GM12878 (cell line): ENCODE measurements at regions of chr2 and their contacts with region 1.

Region 1: GRCh38 chr2:127563458-127564428 is 28.3 kb downstream of the MYO7B start:
- DNase-seq: peak; percentile 92
- ATAC-seq: peak; percentile 92
- H3K4me3 ChIP-seq: peak overlapping the region; percentile 54
- H3K27ac ChIP-seq: peak overlapping the region; percentile 70
- H3K4me1 ChIP-seq: peaks cover 17% of the 10 kb centered on the region
- H3K27me3 ChIP-seq: 0 out of 4 replicates have a peak, but pooled peaks cover 0 to 4% of the 10 kb centered on the region in 2 experiments
- CTCF ChIP-seq: no peak
- EP300 ChIP-seq: peak; percentile 86 to 95
- POLR2A ChIP-seq: no peak
- RAD21 ChIP-seq: no peak

Region 2: GRCh38 chr2:127526149-127527000 is 37.4 kb before region 1 on chr2 and contains the start of gene IWS1:
- CTCF ChIA-PET with region 1: interaction called, 10 read pairs
- POLR2A ChIA-PET with region 1: interaction called, 8 read pairs
- RAD21 ChIA-PET with region 1: interaction called, 15 read pairs
- SMC1A ChIA-PET with region 1: interaction called, 15 read pairs
- in situ Hi-C with region 1: no loop called
- intact Hi-C with region 1: loop called (anchors 1 kb)
- DNase-seq: peak; percentile 88
- ATAC-seq: peak; percentile 93
- H3K4me3 ChIP-seq: peak within 1 kb of the TSS; percentile 93
- H3K27ac ChIP-seq: peak within 1 kb of the TSS; percentile 83
- H3K4me1 ChIP-seq: no peaks in the 10 kb centered on the region
- H3K27me3 ChIP-seq: no peaks in the 10 kb centered on the region
- CTCF ChIP-seq: peak in 2 of 3 experiments; percentile 3 to 21; a peak in 1 of 6 replicates
- EP300 ChIP-seq: no peak
- POLR2A ChIP-seq: peak; percentile 91
- RAD21 ChIP-seq: no peak
- polyA plus RNA-seq, gene IWS1: 21.9 to 34.2 TPM

Region 3: GRCh38 chr2:127576433-127577207 is 12.9 kb after region 1 on chr2:
- CTCF ChIA-PET with region 1: interaction called, 9 read pairs
- POLR2A ChIA-PET with region 1: interaction called, 6 read pairs
- RAD21 ChIA-PET with region 1: interaction called, 8 read pairs
- SMC1A ChIA-PET with region 1: interaction called, 16 read pairs
- in situ Hi-C with region 1: no loop called
- intact Hi-C with region 1: no loop called
- DNase-seq: no peak
- ATAC-seq: no peak
- H3K4me3 ChIP-seq: no peak overlapping the region
- H3K27ac ChIP-seq: no peak overlapping the region
- H3K4me1 ChIP-seq: peaks cover 23% of the 10 kb centered on the region
- H3K27me3 ChIP-seq: peaks cover 0 to 1% of the 10 kb centered on the region in 2 experiments; a peak in 1 of 4 replicates
- CTCF ChIP-seq: no peak
- EP300 ChIP-seq: no peak
- POLR2A ChIP-seq: no peak
- RAD21 ChIP-seq: no peak